Astrocyte of the cerebellum (primary cell): ENCODE measurements at regions of chr10 and their contacts with region 1.

Region 1: DNA sequence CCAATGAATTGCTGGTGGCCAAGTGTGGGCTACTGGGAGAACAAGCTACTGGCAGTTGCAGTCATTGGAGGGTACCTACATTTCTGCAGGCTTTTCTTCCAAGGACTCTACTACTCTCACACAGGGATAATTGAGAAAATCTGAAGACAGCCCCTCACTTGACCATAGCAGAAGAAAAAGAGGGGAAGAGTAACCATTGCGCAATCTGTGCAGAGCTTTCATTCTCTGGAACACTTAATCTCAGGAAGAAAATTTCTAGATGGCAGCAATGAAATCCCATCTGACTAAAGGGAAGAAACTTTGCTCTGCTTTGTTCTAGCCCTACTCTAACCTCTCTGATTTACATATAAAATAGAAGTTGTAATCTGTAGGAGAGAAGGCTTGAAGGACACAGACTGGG is 1239.6 kb upstream of the SORCS1 start:
- DNase-seq: no peak
- H3K4me3 ChIP-seq: no peak overlapping the region
- CTCF ChIP-seq: no peak

Region 2: DNA sequence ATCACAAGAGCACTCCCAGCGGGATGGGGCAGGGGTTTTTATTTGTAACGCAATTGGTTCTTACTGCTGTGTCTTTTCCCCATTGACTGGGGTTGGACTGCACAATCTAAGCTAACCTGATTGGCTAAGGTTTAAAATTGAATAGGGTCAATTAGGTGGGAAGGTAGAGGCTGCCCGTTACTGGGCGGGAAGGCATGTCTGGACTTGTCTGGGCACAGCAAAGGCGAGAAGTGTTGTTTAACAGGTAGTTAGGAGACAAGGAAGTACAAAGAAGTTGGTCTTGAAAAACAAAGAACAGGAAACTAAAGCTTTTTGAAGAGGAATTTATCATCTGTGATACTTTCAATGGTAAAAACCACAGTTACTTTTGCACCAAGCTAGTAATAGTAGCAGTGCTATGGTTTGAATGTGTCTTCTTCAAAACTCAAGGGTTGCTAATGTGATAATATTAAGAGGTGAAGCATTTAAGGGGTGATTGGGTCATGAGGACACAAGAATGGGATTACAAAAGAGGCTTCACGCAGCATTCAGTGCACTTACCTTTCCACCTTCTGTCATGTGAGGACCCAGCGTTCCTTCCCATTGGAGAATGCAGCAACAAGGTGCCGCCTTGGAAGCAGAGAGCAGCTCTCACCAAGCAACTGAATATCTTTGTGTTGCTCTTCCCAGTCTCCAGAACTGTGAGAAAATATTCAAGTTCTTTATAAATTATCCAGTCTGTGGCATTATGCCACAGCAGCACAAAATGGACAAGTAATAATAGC is 364.2 kb before region 1 on chr10:
- in situ Hi-C with region 1: no loop called
- DNase-seq: no peak
- H3K4me3 ChIP-seq: no peak overlapping the region
- CTCF ChIP-seq: no peak

Region 3: GRCh38 chr10:108360187-108360586 is 44.0 kb before region 1 on chr10:
- in situ Hi-C with region 1: loop called (anchors 5 kb)
- DNase-seq: no peak
- H3K4me3 ChIP-seq: no peak overlapping the region
- CTCF ChIP-seq: no peak

Region 4: DNA sequence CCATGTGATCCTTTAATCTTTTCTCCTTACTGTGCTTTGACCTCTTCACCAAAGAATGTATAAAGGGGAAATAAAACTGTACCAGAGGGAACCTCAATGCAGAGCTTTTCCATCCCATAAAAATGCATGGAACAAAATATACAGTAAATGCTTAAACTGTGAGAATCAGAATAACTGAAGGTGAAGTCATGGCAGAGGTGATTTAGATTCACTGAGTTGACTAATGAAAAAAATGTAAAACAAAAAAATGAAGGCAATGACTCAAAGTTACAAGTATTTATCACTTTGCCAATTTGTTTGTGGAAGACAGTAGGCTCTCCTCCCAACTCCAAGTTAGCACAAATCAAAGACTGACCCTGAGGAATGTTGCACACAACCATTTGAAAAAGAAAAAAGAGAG is 92.0 kb after region 1 on chr10:
- in situ Hi-C with region 1: no loop called
- DNase-seq: no peak
- H3K4me3 ChIP-seq: no peak overlapping the region
- CTCF ChIP-seq: no peak